ENCODE measurements at regions of chr12 and their contacts with region 1.

Region 1: DNA sequence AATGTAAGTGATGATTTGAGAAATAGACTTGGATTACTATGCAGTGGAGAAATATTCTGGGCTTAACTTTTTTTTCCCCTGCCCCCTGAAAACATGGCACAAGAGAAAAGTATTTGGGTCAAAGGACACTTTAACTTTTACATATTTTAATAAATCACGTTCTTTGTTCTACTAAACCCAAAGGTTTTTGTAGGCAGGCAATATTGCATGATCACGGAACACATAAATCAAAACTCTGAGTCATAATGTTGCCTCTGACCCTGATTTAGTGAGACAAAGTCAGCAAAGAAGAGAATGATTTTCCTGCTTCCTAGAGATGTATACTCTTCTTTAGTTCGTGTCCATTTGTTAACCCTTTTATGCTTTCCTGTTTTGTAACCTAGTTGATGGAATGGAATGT is 38.0 kb downstream of the ABCD2 start:
- DNase-seq: no peak
- ATAC-seq: no peak
- H3K4me3 ChIP-seq: no peak overlapping the region
- H3K4me3 Mint-ChIP-seq: no peak overlapping the region
- H3K27ac ChIP-seq: no peak overlapping the region
- H3K27ac Mint-ChIP-seq: no peak overlapping the region
- H3K4me1 ChIP-seq: no peaks in the 10 kb centered on the region
- H3K4me1 Mint-ChIP-seq: peaks cover 4% of the 10 kb centered on the region
- H3K27me3 ChIP-seq: no peaks in the 10 kb centered on the region
- H3K27me3 Mint-ChIP-seq: no peaks in the 10 kb centered on the region
- CTCF ChIP-seq: no peak

Region 2: GRCh38 chr12:39595923-39596322 is 14.3 kb after region 1 on chr12:
- CTCF ChIA-PET with region 1: interaction called, 4 read pairs
- POLR2A ChIA-PET with region 1: no interaction called
- intact Hi-C with region 1: loop called in 1 of 2 experiments (anchors 2 kb)
- DNase-seq: no peak
- ATAC-seq: no peak
- H3K4me3 ChIP-seq: no peak overlapping the region
- H3K4me3 Mint-ChIP-seq: no peak overlapping the region
- H3K27ac ChIP-seq: no peak overlapping the region
- H3K27ac Mint-ChIP-seq: peak overlapping the region; percentile 45
- H3K4me1 ChIP-seq: no peaks in the 10 kb centered on the region
- H3K4me1 Mint-ChIP-seq: peaks cover 29% of the 10 kb centered on the region
- H3K27me3 ChIP-seq: no peaks in the 10 kb centered on the region
- H3K27me3 Mint-ChIP-seq: no peaks in the 10 kb centered on the region
- CTCF ChIP-seq: no peak